Vagina (tissue), 2 donors: ENCODE measurements at regions of chr4 and their contacts with region 1.

Region 1: GRCh38 chr4:3637326-3638016 is 105.2 kb upstream of the LRPAP1 start:
- DNase-seq: no peak
- H3K4me3 ChIP-seq: no peak overlapping the region
- H3K27ac ChIP-seq: peak overlapping the region; percentile 68
- H3K4me1 ChIP-seq: peaks cover 23% of the 10 kb centered on the region
- H3K27me3 ChIP-seq: no peaks in the 10 kb centered on the region
- CTCF ChIP-seq: peak in 1 of 3 experiments; percentile 10
- POLR2A ChIP-seq: no peak

Region 2: GRCh38 chr4:3657902-3658529 is 20.5 kb after region 1 on chr4:
- intact Hi-C with region 1: no loop called
- DNase-seq: no peak
- H3K4me3 ChIP-seq: no peak overlapping the region
- H3K27ac ChIP-seq: peak overlapping the region; percentile 75
- H3K4me1 ChIP-seq: peaks cover 28% of the 10 kb centered on the region
- H3K27me3 ChIP-seq: no peaks in the 10 kb centered on the region
- CTCF ChIP-seq: no peak
- POLR2A ChIP-seq: no peak

Region 3: GRCh38 chr4:3765271-3766040 is 128.0 kb after region 1 on chr4:
- intact Hi-C with region 1: loop called (anchors 5 kb)
- DNase-seq: no peak
- H3K4me3 ChIP-seq: peak overlapping the region; percentile 40 to 55
- H3K27ac ChIP-seq: peak overlapping the region; percentile 74
- H3K4me1 ChIP-seq: peaks cover 11% of the 10 kb centered on the region
- H3K27me3 ChIP-seq: no peaks in the 10 kb centered on the region
- CTCF ChIP-seq: no peak
- POLR2A ChIP-seq: no peak